ENCODE measurements at regions of chr10 and their contacts with region 1.

Region 1: DNA sequence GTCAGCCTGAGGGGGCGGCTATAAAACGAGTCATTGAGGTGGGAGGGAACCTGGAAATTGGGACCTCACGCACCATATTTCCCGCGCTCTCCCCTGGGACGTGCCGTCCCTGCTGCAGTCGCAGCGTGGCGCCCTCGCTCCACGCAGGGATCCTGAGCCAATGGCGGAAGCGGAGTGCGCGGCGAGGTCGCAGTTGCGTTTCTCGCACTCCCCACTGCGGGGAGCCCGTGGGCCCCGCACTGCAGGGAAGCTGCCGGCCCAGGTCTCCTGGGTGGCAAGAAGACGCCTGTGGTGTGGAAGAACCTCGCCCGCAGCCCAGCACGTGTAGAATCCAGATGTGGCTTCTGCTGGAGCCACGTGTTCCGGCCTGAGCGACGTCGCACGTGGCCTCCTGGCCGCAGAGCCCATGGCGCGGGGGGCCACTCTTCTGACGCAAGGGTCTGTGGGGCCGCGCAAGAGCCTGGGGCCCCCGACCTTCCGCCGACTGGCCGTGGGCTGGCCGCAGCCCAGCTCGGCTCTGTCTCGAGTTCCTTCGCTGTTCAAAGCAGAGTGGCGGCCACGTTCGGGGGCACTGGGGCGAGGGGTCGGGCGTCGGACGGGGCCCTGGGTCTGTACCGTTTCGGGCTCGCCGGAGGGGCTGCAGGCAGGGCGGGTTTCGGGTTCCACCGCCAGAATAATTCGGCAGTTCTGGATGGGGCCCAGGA is 26.4 kb downstream of the HIF1AN start:
- DNase-seq: peak; percentile 74
- ATAC-seq: peak; percentile 95
- H3K4me3 ChIP-seq: no peak overlapping the region
- H3K27ac ChIP-seq: no peak overlapping the region
- H3K4me1 ChIP-seq: peaks cover 0 to 10% of the 10 kb centered on the region in 2 experiments; a peak in 2 of 4 replicates
- H3K27me3 ChIP-seq: no peaks in the 10 kb centered on the region
- CTCF ChIP-seq: peak; percentile 99 to 100 (median 100)
- POLR2A ChIP-seq: no peak
- RAD21 ChIP-seq: peak; percentile 100

Region 2: GRCh38 chr10:100551196-100551595 is 11.0 kb before region 1 on chr10:
- CTCF ChIA-PET with region 1: no interaction called
- POLR2A ChIA-PET with region 1: no interaction called
- RAD21 ChIA-PET with region 1: no interaction called
- intact Hi-C with region 1: no loop called
- DNase-seq: no peak
- ATAC-seq: no peak
- H3K4me3 ChIP-seq: no peak overlapping the region
- H3K27ac ChIP-seq: no peak overlapping the region
- H3K4me1 ChIP-seq: no peaks in the 10 kb centered on the region
- H3K27me3 ChIP-seq: no peaks in the 10 kb centered on the region
- CTCF ChIP-seq: no peak
- POLR2A ChIP-seq: no peak
- RAD21 ChIP-seq: no peak

Region 3: DNA sequence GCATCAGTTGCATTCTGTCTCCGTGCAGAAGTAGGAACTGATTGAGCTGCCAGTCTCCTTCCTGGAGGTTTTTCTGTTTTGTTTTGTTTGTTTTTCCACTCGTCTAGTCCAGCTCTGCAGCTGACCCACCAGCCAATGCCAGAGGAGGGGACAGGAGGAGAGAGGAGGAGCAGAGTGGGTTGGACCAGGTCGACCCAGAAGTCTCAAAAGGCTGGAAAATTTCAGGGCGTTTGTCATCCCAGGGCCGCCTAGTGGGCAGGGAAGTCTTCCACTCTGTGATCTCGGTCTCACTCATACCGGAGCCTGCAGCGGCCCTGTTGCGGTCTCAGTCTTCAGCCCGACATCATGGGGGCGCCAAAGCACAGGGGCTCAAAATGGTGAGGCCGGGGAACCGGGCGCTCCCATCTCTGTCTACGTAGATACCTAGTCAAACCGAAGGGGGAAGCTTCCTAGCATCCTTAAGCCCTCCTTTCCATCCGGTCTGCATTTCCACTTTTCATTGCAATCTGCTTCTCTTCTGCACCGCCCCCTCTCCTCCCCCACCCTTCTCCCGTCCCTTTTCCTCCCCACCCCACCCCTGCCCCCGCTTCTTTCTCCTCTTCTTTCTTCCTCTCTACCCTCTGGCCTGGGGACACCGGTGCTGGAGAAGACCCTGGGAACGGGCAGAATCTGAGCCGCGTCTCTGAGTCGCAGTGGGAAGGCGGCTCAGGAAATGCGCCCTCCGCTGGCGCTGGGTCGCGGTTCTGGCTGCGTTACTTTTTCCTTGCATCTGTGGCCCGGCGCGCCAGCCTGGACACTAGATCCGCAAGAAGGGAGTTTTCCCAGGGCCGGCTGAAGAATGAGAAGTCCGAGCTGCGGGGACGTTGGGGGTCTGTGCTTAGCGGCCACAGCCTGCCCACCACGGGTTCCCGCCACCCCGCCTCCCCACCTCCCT is 167.0 kb after region 1 on chr10:
- CTCF ChIA-PET with region 1: interaction called, 11 read pairs
- POLR2A ChIA-PET with region 1: no interaction called
- RAD21 ChIA-PET with region 1: interaction called in 1 of 2 experiments, 3 read pairs
- intact Hi-C with region 1: loop called (anchors 5 kb)
- DNase-seq: peak; percentile 87
- ATAC-seq: peak; percentile 85
- H3K4me3 ChIP-seq: peak overlapping the region; percentile 52 to 62
- H3K27ac ChIP-seq: peak overlapping the region; percentile 37
- H3K4me1 ChIP-seq: peaks cover 32 to 37% of the 10 kb centered on the region in 2 experiments
- H3K27me3 ChIP-seq: no peaks in the 10 kb centered on the region
- CTCF ChIP-seq: peak; percentile 61 to 93 (median 82)
- POLR2A ChIP-seq: no peak
- RAD21 ChIP-seq: peak; percentile 78